Panc1 (cell line): ENCODE measurements at regions of chr3 and their contacts with region 1.

Region 1: DNA sequence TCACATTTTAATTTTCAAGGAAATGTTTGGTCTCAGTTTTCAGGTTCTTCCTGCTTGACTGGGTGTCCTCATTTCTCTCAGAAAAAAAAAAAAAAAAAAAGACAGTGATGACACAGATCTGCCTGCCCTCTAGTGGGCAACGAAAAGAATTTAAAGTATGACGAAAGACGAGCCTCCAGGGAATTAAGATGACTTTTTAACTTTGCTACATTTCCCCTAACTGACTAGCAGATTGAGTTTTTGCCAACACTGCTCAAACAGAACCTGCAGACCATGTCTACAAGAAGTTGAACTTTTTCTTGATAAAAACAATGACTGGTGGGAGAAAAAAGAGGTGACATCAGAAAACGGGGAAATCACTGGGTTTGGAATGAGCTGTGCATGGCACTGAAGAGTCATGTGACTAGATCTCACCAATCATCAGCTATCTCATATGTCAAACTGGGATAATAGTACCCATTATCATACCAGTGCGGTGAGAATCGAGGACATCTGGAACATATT is 40.8 kb downstream of the EOMES start:
- DNase-seq: peak; percentile 66
- ATAC-seq: peak; percentile 70
- H3K4me3 ChIP-seq: peak overlapping the region in 1 of 2 experiments; percentile 31; a peak in 1 of 4 replicates
- H3K27ac ChIP-seq: peak overlapping the region; percentile 94
- H3K4me1 ChIP-seq: peaks cover 19% of the 10 kb centered on the region
- H3K27me3 ChIP-seq: no peaks in the 10 kb centered on the region
- CTCF ChIP-seq: peak; percentile 68

Region 2: GRCh38 chr3:27533718-27534573 is 147.4 kb before region 1 on chr3:
- CTCF ChIA-PET with region 1: interaction called, 3 read pairs
- POLR2A ChIA-PET with region 1: no interaction called
- in situ Hi-C with region 1: no loop called
- intact Hi-C with region 1: loop called (anchors 10 kb)
- DNase-seq: peak; percentile 99
- ATAC-seq: peak; percentile 93
- H3K4me3 ChIP-seq: peak overlapping the region; percentile 2 to 31; a peak in 2 of 4 replicates
- H3K27ac ChIP-seq: peak overlapping the region; percentile 99
- H3K4me1 ChIP-seq: peaks cover 45% of the 10 kb centered on the region
- H3K27me3 ChIP-seq: no peaks in the 10 kb centered on the region
- CTCF ChIP-seq: no peak

Region 3: GRCh38 chr3:28124882-28125281 is 443.6 kb after region 1 on chr3:
- CTCF ChIA-PET with region 1: interaction called, 11 read pairs
- POLR2A ChIA-PET with region 1: no interaction called
- in situ Hi-C with region 1: no loop called
- intact Hi-C with region 1: no loop called
- DNase-seq: no peak
- ATAC-seq: no peak
- H3K4me3 ChIP-seq: no peak overlapping the region
- H3K27ac ChIP-seq: no peak overlapping the region
- H3K4me1 ChIP-seq: no peaks in the 10 kb centered on the region
- H3K27me3 ChIP-seq: no peaks in the 10 kb centered on the region
- CTCF ChIP-seq: no peak